Dorsolateral prefrontal cortex (tissue), 120 donors: ENCODE measurements at regions of chr6 and their contacts with region 1.

Region 1: DNA sequence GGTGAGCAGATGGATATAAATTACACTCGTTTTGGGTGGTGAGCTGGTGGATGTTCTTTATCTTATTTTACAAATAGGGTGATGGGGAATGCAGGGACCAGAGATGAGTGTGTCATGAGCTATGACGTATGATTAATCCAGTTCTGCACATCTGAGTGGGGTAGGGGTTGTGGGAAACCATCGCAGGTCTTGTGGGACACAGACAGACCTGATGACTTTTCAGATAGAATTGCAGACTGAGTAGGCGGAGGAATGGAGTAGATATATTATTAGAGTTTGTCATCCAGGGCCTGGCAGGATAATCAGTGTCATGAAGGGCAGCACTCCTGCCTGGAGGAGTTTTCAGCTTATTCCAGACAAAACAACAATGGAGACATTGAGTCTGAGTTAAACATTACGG is 12.9 kb upstream of the DSP start:
- DNase-seq: no peak
- H3K4me3 ChIP-seq: no peak overlapping the region
- H3K27ac ChIP-seq: no peak overlapping the region
- H3K27me3 ChIP-seq: peaks cover 0 to 77% (median 29%) of the 10 kb centered on the region in 45 donors
- CTCF ChIP-seq: no peak

Region 2: DNA sequence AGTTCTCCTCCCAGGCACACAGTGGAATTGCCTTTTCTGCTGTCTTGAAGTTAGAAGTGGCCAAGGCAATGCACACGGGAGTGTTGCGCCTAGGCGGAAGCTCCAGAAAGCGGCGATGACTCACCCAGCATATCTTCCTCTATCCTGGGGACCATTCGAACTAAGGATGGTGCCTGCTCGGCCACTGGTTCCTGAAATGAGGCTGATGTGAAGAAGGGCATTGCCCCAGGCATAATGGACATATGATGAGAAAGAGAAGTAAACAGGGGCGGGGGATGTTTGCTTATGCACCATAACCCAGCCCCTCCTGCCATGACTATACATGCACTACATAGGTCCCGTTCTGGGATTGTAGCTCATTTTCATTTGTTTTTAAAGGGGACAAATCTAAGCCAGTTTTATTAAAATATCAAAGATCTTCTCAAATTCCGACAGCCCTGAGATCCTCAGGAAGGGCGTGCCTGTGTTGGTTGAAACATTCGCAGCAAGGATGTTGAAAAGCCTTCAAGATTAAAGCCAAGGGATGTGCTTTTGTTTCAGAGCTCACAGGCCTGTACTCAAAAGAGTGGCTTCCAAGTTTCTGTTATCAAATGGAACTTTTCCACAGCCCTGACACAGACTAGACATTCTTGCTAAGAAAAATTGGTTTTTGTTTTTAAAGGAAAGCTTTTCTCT is 721.6 kb before region 1 on chr6:
- intact Hi-C with region 1: loop called in 1 of 2 experiments (anchors 5 kb)
- DNase-seq: peak in 4 of 10 donors; percentile 25 to 60 (median 42)
- H3K4me3 ChIP-seq: no peak overlapping the region
- H3K27ac ChIP-seq: peak overlapping the region in 26 of 59 donors; percentile 0 to 72 (median 44)
- H3K27me3 ChIP-seq: peaks cover 0 to 13% (median 0%) of the 10 kb centered on the region in 45 donors
- CTCF ChIP-seq: no peak

Region 3: GRCh38 chr6:7431674-7432390 is 96.7 kb before region 1 on chr6:
- intact Hi-C with region 1: no loop called
- DNase-seq: no peak
- H3K4me3 ChIP-seq: no peak overlapping the region
- H3K27ac ChIP-seq: peak overlapping the region in 2 of 59 donors; percentile 28 to 35
- H3K27me3 ChIP-seq: peaks cover 0 to 11% (median 0%) of the 10 kb centered on the region in 45 donors
- CTCF ChIP-seq: no peak

Region 4: GRCh38 chr6:7489376-7489775 is 39.2 kb before region 1 on chr6:
- intact Hi-C with region 1: no loop called
- DNase-seq: no peak
- H3K4me3 ChIP-seq: no peak overlapping the region
- H3K27ac ChIP-seq: no peak overlapping the region
- H3K27me3 ChIP-seq: peaks cover 0 to 18% (median 0%) of the 10 kb centered on the region in 45 donors
- CTCF ChIP-seq: no peak